H1 (cell line): ENCODE measurements at regions of chr5 and their contacts with region 1.

Region 1: DNA sequence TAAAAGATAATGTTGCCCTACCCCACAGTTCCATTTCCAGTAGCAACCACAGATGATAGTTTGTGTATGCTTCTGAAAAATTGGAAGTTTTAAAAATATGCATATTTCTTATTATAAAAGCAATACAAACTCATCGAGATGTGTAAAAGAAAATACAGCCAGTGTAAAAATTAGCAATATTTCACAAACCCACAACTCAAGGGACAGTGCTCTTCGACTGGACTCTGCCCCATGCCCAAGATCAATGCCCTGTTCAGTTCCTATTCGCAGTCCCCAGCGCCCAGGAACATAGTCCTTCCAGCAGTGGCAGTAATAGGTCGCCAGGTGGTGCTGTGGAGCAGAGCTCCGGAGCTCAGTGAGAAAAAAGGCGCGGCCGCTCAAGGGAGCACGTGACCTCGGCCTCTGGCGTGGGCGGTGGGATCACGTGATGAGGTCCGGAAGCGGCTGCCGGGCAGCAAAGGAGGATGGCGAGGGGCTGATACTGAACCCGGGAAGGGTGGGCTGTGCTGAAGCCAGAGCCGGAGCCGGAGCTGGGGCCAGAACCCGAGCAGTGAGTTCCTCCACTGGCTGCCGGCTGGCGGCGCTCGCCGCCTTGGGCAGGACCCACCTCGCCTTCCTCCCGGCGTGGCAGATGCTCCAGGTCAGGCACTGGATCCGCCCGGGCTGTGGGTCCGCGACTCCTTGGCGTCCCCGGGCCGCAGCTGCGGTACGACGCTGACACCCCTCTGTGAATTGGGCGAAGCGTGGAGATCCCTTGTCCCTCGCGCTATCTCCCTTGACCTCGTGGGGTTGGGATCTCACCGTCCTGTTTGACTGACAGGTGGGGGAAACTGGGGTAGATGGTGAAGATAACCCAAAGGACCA is at the start of gene SLC36A1:
- DNase-seq: peak; percentile 93 to 98
- H3K4me3 ChIP-seq: peak within 1 kb of the TSS; percentile 45 to 81 (median 72)
- H3K27ac ChIP-seq: no peak within 1 kb of the TSS
- H3K4me1 ChIP-seq: peaks cover 0 to 10% (median 4%) of the 10 kb centered on the region in 4 experiments; a peak in 4 of 7 replicates
- H3K27me3 ChIP-seq: no peaks in the 10 kb centered on the region
- CTCF ChIP-seq: peak; percentile 76 to 80 (median 78)
- EP300 ChIP-seq: no peak; a peak in 1 of 3 replicates
- POLR2A ChIP-seq: peak in 1 of 2 experiments; percentile 67; a peak in 2 of 3 replicates
- RAD21 ChIP-seq: peak; percentile 64 to 76
- total RNA-seq, gene SLC36A1: 6.6 and 9.1 TPM in 2 replicates

Region 2: DNA sequence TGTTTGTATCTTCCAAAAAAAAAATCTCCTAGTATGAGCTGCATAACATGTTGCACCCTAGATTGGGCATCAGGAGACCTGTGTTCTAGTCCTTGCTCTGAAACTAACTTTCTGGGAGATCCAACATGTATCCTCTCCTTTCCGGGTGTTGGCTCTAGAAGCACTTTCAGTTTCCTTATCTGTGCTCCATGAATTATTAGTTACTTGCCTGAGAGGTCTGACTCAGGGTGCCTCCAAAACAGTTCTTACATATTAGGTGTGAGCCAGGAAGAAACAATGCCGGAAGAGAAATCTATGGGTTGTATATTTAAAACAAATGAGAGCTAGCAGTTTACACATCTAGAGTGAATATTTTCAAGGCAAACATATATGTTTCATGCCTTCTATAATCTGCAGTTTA is 63.3 kb before region 1 on chr5:
- CTCF ChIA-PET with region 1: interaction called, 21 read pairs
- POLR2A ChIA-PET with region 1: no interaction called
- DNase-seq: no peak
- H3K4me3 ChIP-seq: no peak overlapping the region
- H3K27ac ChIP-seq: no peak overlapping the region
- H3K4me1 ChIP-seq: peaks cover 5 to 22% (median 18%) of the 10 kb centered on the region in 4 experiments
- H3K27me3 ChIP-seq: no peaks in the 10 kb centered on the region
- CTCF ChIP-seq: no peak
- EP300 ChIP-seq: no peak
- POLR2A ChIP-seq: no peak
- RAD21 ChIP-seq: no peak

Region 3: GRCh38 chr5:151463137-151464029 is 16.0 kb after region 1 on chr5:
- CTCF ChIA-PET with region 1: interaction called, 136 read pairs
- POLR2A ChIA-PET with region 1: interaction called, 13 read pairs
- DNase-seq: peak in 1 of 2 experiments; percentile 83
- H3K4me3 ChIP-seq: no peak overlapping the region
- H3K27ac ChIP-seq: no peak overlapping the region
- H3K4me1 ChIP-seq: no peaks in the 10 kb centered on the region
- H3K27me3 ChIP-seq: no peaks in the 10 kb centered on the region
- CTCF ChIP-seq: peak; percentile 81 to 85 (median 82)
- EP300 ChIP-seq: no peak
- POLR2A ChIP-seq: no peak
- RAD21 ChIP-seq: peak; percentile 53 to 76

Region 4: DNA sequence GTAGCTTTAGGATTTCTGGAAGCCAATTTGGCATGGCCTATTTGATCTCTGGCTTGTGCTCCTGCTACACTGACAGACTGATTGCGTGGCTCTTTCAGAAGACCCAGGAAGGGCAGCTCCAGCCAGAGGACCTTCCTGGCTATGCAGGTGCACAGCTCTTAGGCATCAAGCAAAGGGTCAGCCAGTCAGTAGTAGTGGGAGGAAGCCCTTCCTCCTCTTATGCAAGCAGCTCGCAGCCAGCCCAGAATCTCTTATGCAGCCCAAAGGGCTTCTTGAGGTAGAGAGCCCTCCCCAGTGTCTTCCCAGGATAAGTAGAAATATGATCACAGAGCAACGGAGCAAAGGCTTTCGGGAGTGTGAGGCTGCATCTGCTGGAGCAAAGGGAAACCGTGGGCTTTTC is 43.2 kb after region 1 on chr5:
- CTCF ChIA-PET with region 1: interaction called, 12 read pairs
- POLR2A ChIA-PET with region 1: no interaction called
- DNase-seq: no peak
- H3K4me3 ChIP-seq: no peak overlapping the region
- H3K27ac ChIP-seq: no peak overlapping the region
- H3K4me1 ChIP-seq: peaks cover 0 to 4% (median 0%) of the 10 kb centered on the region in 4 experiments; a peak in 1 of 7 replicates
- H3K27me3 ChIP-seq: no peaks in the 10 kb centered on the region
- CTCF ChIP-seq: no peak
- EP300 ChIP-seq: no peak
- POLR2A ChIP-seq: no peak
- RAD21 ChIP-seq: no peak

Region 5: GRCh38 chr5:151509231-151509630 is 61.8 kb after region 1 on chr5:
- CTCF ChIA-PET with region 1: interaction called, 17 read pairs
- POLR2A ChIA-PET with region 1: interaction called, 4 read pairs
- DNase-seq: no peak
- H3K4me3 ChIP-seq: no peak overlapping the region
- H3K27ac ChIP-seq: no peak overlapping the region
- H3K4me1 ChIP-seq: no peaks in the 10 kb centered on the region; a peak in 1 of 7 replicates
- H3K27me3 ChIP-seq: no peaks in the 10 kb centered on the region
- CTCF ChIP-seq: no peak
- EP300 ChIP-seq: no peak
- POLR2A ChIP-seq: no peak
- RAD21 ChIP-seq: no peak

Region 6: GRCh38 chr5:151730384-151730783 is 283.0 kb after region 1 on chr5:
- CTCF ChIA-PET with region 1: no interaction called
- POLR2A ChIA-PET with region 1: no interaction called
- DNase-seq: no peak
- H3K4me3 ChIP-seq: 0 out of 8 replicates have a peak overlapping the region, but pooled peaks of 1 of the 4 experiments have one; percentile 9
- H3K27ac ChIP-seq: no peak overlapping the region
- H3K4me1 ChIP-seq: peaks cover 0 to 7% (median 3%) of the 10 kb centered on the region in 4 experiments; a peak in 3 of 7 replicates
- H3K27me3 ChIP-seq: no peaks in the 10 kb centered on the region
- CTCF ChIP-seq: no peak
- EP300 ChIP-seq: no peak
- POLR2A ChIP-seq: no peak
- RAD21 ChIP-seq: no peak